ENCODE measurements at regions of chr15 and their contacts with region 1.

Region 1: GRCh38 chr15:92808978-92809879 is 90.9 kb upstream of the CHD2 start:
- DNase-seq: peak; percentile 98 to 99 (median 98)
- ATAC-seq: peak; percentile 80 to 84 (median 82)
- H3K4me3 ChIP-seq: peak overlapping the region; percentile 8 to 57 (median 46)
- H3K27ac ChIP-seq: peak overlapping the region; percentile 97 to 99 (median 98)
- H3K4me1 ChIP-seq: peaks cover 0 to 24% (median 13%) of the 10 kb centered on the region in 3 donors
- H3K27me3 ChIP-seq: no peaks in the 10 kb centered on the region
- CTCF ChIP-seq: peak; percentile 99 to 100 (median 100)

Region 2: GRCh38 chr15:92869997-92870591 is 60.9 kb after region 1 on chr15:
- intact Hi-C with region 1: loop called in 1 of 3 experiments (anchors 10 kb)
- DNase-seq: no peak
- ATAC-seq: peak in 3 of 4 donors; percentile 25 to 46 (median 44)
- H3K4me3 ChIP-seq: no peak overlapping the region
- H3K27ac ChIP-seq: peak overlapping the region in 3 of 4 donors; percentile 26 to 39 (median 34)
- H3K4me1 ChIP-seq: no peaks in the 10 kb centered on the region
- H3K27me3 ChIP-seq: no peaks in the 10 kb centered on the region
- CTCF ChIP-seq: no peak

Region 3: GRCh38 chr15:92903941-92904831 is 95.0 kb after region 1 on chr15:
- intact Hi-C with region 1: loop called in 1 of 3 experiments (anchors 5 kb)
- DNase-seq: peak; percentile 98 to 100 (median 99)
- ATAC-seq: peak; percentile 81 to 89 (median 85)
- H3K4me3 ChIP-seq: peak overlapping the region; percentile 18 to 58 (median 48)
- H3K27ac ChIP-seq: peak overlapping the region; percentile 91 to 99 (median 96)
- H3K4me1 ChIP-seq: peaks cover 26 to 45% (median 39%) of the 10 kb centered on the region in 3 donors
- H3K27me3 ChIP-seq: no peaks in the 10 kb centered on the region
- CTCF ChIP-seq: no peak

Region 4: GRCh38 chr15:92917606-92918407 is 108.6 kb after region 1 on chr15:
- intact Hi-C with region 1: loop called in 1 of 3 experiments (anchors 10 kb)
- DNase-seq: peak; percentile 90 to 95 (median 92)
- ATAC-seq: peak; percentile 73 to 80 (median 76)
- H3K4me3 ChIP-seq: peak overlapping the region in 2 of 4 donors; percentile 11 to 15
- H3K27ac ChIP-seq: peak overlapping the region; percentile 25 to 92 (median 61)
- H3K4me1 ChIP-seq: peaks cover 28 to 87% (median 68%) of the 10 kb centered on the region in 3 donors
- H3K27me3 ChIP-seq: no peaks in the 10 kb centered on the region
- CTCF ChIP-seq: peak; percentile 74 to 88 (median 78)

Region 5: DNA sequence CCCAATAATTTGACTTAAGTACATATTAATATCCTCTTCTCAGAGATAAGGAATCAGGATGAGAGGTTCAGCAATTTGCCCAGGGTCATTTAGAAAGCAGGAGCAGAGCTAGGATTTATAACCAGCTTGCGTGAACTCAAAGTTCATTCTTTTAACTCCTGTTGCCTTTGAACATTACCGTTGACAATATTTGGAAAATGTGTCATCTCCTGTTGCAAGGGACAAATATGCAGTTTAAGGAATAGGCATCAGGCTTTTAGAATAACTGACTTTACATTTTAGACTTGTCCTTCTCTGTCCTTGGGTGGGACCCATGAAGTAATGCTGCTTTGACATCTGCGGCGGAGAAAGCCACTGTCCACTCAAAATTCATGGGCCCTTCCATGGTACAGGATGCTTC is 531.9 kb after region 1 on chr15:
- intact Hi-C with region 1: no loop called
- DNase-seq: no peak
- ATAC-seq: no peak
- H3K4me3 ChIP-seq: no peak overlapping the region
- H3K27ac ChIP-seq: no peak overlapping the region
- H3K4me1 ChIP-seq: no peaks in the 10 kb centered on the region
- H3K27me3 ChIP-seq: no peaks in the 10 kb centered on the region
- CTCF ChIP-seq: no peak

Measured in pancreas (tissue), 10 donors.